ENCODE measurements at regions of chr18 and their contacts with region 1.

Region 1: GRCh38 chr18:33316146-33316587 is 124.4 kb downstream of the CCDC178 start:
- DNase-seq: no peak
- ATAC-seq: no peak
- H3K4me3 ChIP-seq: no peak overlapping the region
- H3K27ac ChIP-seq: no peak overlapping the region
- H3K4me1 ChIP-seq: no peaks in the 10 kb centered on the region
- H3K27me3 ChIP-seq: no peaks in the 10 kb centered on the region
- CTCF ChIP-seq: no peak
- POLR2A ChIP-seq: no peak

Region 2: GRCh38 chr18:32771169-32771751 is 544.9 kb before region 1 on chr18:
- in situ Hi-C with region 1: no loop called
- intact Hi-C with region 1: no loop called
- DNase-seq: no peak
- ATAC-seq: peak in 1 of 2 donors; percentile 24
- H3K4me3 ChIP-seq: peak overlapping the region; percentile 31 to 65 (median 48)
- H3K27ac ChIP-seq: no peak overlapping the region
- H3K4me1 ChIP-seq: peaks cover 7 to 11% of the 10 kb centered on the region in 2 donors
- H3K27me3 ChIP-seq: peaks cover 21 to 47% (median 40%) of the 10 kb centered on the region in 3 donors
- CTCF ChIP-seq: no peak
- POLR2A ChIP-seq: no peak

Region 3: GRCh38 chr18:33076601-33077000 is 239.6 kb before region 1 on chr18:
- in situ Hi-C with region 1: no loop called
- intact Hi-C with region 1: no loop called
- DNase-seq: no peak
- ATAC-seq: no peak
- H3K4me3 ChIP-seq: no peak overlapping the region
- H3K27ac ChIP-seq: no peak overlapping the region
- H3K4me1 ChIP-seq: no peaks in the 10 kb centered on the region
- H3K27me3 ChIP-seq: no peaks in the 10 kb centered on the region
- CTCF ChIP-seq: no peak
- POLR2A ChIP-seq: no peak

Region 4: GRCh38 chr18:33210575-33211189 is 105.5 kb before region 1 on chr18:
- in situ Hi-C with region 1: loop called in 1 of 4 experiments (anchors 25 kb)
- intact Hi-C with region 1: no loop called
- DNase-seq: no peak
- ATAC-seq: no peak
- H3K4me3 ChIP-seq: no peak overlapping the region
- H3K27ac ChIP-seq: no peak overlapping the region
- H3K4me1 ChIP-seq: no peaks in the 10 kb centered on the region
- H3K27me3 ChIP-seq: no peaks in the 10 kb centered on the region
- CTCF ChIP-seq: no peak
- POLR2A ChIP-seq: no peak

Region 5: GRCh38 chr18:33630476-33630875 is 314.3 kb after region 1 on chr18:
- in situ Hi-C with region 1: no loop called
- intact Hi-C with region 1: no loop called
- DNase-seq: no peak
- ATAC-seq: no peak
- H3K4me3 ChIP-seq: no peak overlapping the region
- H3K27ac ChIP-seq: no peak overlapping the region
- H3K4me1 ChIP-seq: no peaks in the 10 kb centered on the region
- H3K27me3 ChIP-seq: no peaks in the 10 kb centered on the region
- CTCF ChIP-seq: no peak
- POLR2A ChIP-seq: no peak

Measured in gastrocnemius medialis (tissue), 4 donors.